Tibial artery (tissue), 4 donors: ENCODE measurements at regions of chr12 and their contacts with region 1.

Region 1: GRCh38 chr12:51047655-51048540 is at the start of gene LETMD1:
- DNase-seq: peak; percentile 97 to 98
- H3K4me3 ChIP-seq: peak within 1 kb of the TSS; percentile 58 to 79
- H3K27ac ChIP-seq: peak within 1 kb of the TSS; percentile 85 to 87
- H3K4me1 ChIP-seq: peaks cover 0 to 24% (median 22%) of the 10 kb centered on the region in 4 donors
- H3K27me3 ChIP-seq: no peaks in the 10 kb centered on the region
- CTCF ChIP-seq: peak; percentile 91 to 93

Region 2: GRCh38 chr12:50971946-50972345 is 76.0 kb before region 1 on chr12:
- intact Hi-C with region 1: no loop called
- DNase-seq: no peak
- H3K4me3 ChIP-seq: no peak overlapping the region
- H3K27ac ChIP-seq: no peak overlapping the region
- H3K4me1 ChIP-seq: no peaks in the 10 kb centered on the region
- H3K27me3 ChIP-seq: no peaks in the 10 kb centered on the region
- CTCF ChIP-seq: no peak

Region 3: DNA sequence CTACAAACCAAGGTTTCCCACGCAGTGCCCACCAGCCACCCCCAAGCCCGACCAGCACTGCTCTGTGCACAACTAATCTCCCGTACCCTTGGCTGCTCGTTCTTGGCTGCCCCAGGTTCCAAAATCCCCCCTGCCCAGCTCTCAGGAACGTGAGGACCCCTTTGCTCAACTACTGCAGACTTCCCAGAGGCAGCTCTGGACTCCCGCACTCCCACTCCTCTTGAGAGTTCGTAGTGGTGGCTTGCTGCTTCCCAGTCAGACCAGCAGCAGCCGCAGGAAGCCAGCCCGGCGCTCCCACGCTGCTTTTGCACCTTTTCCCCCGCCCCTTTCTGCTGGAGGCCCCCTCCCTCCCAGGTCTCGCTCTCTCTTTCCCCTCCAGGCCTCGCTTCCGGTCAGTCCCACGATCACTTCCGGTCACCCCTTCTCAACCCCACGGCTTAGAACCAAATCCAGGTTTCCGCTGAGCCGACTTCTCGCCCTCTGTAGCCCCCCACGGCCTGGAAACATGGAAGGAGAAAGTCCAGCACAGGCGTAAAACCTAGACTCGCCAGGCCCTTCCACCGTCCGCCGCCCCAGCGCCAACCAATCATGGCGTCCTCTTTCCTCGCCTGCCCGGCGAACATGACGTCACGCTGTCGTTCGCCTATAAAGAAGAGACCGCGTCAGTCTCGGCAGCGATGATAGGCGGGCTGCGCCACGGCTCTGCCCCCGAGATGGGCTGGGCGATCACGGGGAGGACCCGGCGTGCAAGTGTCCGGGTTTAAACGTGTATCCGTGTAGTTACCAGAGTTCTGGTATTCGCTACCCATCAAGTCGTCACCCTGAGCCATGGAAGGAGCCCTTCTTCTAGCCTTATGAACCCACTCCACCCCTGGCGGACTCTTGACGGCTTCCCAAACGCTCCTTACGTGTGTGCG is 124.9 kb after region 1 on chr12 and contains the start of gene TFCP2:
- intact Hi-C with region 1: loop called (anchors 5 kb)
- DNase-seq: peak; percentile 97 to 98
- H3K4me3 ChIP-seq: peak within 1 kb of the TSS; percentile 67 to 91
- H3K27ac ChIP-seq: peak within 1 kb of the TSS; percentile 97
- H3K4me1 ChIP-seq: peaks cover 0 to 28% (median 14%) of the 10 kb centered on the region in 4 donors
- H3K27me3 ChIP-seq: no peaks in the 10 kb centered on the region
- CTCF ChIP-seq: no peak

Region 4: DNA sequence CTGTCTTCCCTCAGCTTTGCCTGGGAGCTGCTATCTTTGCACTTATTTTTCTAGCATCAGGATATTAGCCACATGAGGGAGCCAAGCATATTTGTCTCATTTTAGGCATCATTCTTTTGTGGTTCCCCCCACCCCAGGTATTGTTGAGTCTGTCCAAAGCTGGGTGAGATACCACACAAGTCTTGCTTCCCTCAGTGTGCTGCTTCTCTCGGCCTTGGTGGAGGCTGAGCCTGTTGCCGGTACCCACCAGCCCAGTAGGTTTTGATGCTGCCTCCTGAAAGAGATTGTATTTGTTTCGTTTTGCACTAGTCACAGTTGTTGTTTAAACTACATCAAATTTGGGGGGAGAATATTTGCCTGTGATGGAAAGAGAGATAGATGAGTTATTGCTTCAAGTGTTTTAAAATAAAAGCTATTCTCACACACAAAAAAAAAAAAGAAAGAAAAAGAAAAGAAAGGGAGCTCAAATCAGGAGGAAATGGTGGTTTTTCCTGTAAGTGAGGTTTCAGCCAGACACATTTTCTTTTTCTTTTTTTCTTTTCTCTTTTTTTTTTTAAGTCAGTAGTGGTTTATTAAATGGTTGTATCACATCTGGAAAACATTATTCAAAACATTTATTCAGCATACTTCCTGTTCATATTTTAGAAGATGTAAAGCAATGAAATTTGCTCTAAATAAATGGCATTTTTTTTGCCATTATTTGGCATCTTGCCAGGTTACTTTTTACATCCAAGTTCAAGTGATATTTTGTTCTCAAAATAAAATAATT is 435.2 kb after region 1 on chr12:
- intact Hi-C with region 1: no loop called
- DNase-seq: no peak
- H3K4me3 ChIP-seq: no peak overlapping the region
- H3K27ac ChIP-seq: no peak overlapping the region
- H3K4me1 ChIP-seq: no peaks in the 10 kb centered on the region
- H3K27me3 ChIP-seq: no peaks in the 10 kb centered on the region
- CTCF ChIP-seq: no peak